Naive thymus-derived CD4-positive, alpha-beta T cell (primary cell): ENCODE measurements at regions of chr10 and their contacts with region 1.

Region 1: GRCh38 chr10:102394079-102394800 is 1.3 kb upstream of the NFKB2 start:
- DNase-seq: peak; percentile 96 to 100 (median 99)
- ATAC-seq: peak; percentile 83
- H3K4me3 ChIP-seq: peak overlapping the region; percentile 78
- H3K4me3 Mint-ChIP-seq: peak overlapping the region; percentile 92 to 99 (median 96)
- H3K27ac ChIP-seq: peak overlapping the region; percentile 100
- H3K27ac Mint-ChIP-seq: peak overlapping the region; percentile 94 to 100 (median 100)
- H3K4me1 ChIP-seq: peaks cover 16 to 24% of the 10 kb centered on the region in 2 donors
- H3K4me1 Mint-ChIP-seq: peaks cover 20 to 45% (median 39%) of the 10 kb centered on the region in 7 donors
- H3K27me3 ChIP-seq: no peaks in the 10 kb centered on the region
- H3K27me3 Mint-ChIP-seq: peaks cover 0 to 4% (median 0%) of the 10 kb centered on the region in 5 donors

Region 2: DNA sequence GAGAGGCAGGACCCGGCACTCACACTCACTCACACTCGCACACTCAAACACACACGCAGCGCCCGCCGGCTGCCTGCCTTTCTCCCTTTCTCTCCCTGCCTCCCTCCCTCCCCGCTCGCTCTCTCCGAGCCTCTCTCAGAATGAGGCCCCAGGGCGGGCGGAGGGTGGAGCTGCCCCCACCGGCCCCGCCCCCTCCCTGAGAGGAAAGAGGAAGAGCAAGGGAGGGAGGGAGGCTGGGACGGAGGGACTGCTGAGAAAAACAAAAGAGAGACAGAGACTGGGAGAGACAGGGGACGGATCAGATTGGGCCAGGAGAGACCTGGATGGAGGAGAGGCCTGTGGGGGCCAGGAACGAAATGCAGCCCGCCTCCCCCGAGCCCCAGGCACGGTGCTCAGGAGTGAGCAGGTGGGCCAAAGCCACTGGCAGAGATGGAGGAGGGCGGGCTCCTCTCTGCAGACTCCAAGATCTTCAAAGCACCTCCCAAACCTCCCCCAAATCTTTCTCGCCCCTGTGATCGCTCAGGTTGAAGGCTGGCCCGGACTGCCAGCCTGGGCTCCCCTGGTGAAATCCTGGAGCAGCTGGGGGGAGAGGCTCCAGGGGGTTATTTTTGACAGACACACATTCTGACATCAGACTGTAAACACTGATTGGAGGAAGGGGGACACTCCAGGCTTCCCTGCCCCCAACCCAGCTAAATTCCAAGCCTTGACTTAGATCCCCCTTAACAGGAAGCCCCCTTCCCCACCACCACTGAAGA is 279.2 kb before region 1 on chr10:
- CTCF ChIA-PET with region 1: no interaction called
- POLR2A ChIA-PET with region 1: no interaction called
- intact Hi-C with region 1: loop called in 1 of 2 experiments (anchors 2 kb)
- DNase-seq: peak; percentile 61 to 83 (median 70)
- ATAC-seq: peak; percentile 86
- H3K4me3 ChIP-seq: peak overlapping the region; percentile 77
- H3K4me3 Mint-ChIP-seq: peak overlapping the region; percentile 84 to 97 (median 92)
- H3K27ac ChIP-seq: peak overlapping the region; percentile 97
- H3K27ac Mint-ChIP-seq: peak overlapping the region; percentile 80 to 98 (median 92)
- H3K4me1 ChIP-seq: peaks cover 49 to 58% of the 10 kb centered on the region in 2 donors
- H3K4me1 Mint-ChIP-seq: peaks cover 54 to 76% (median 67%) of the 10 kb centered on the region in 7 donors
- H3K27me3 ChIP-seq: no peaks in the 10 kb centered on the region
- H3K27me3 Mint-ChIP-seq: no peaks in the 10 kb centered on the region

Region 3: GRCh38 chr10:102225646-102226541 is 168.3 kb before region 1 on chr10 and contains the start of gene ELOVL3:
- CTCF ChIA-PET with region 1: interaction called, 5 read pairs
- POLR2A ChIA-PET with region 1: interaction called, 5 read pairs
- intact Hi-C with region 1: loop called (anchors 1 kb)
- DNase-seq: peak; percentile 56 to 83 (median 79)
- ATAC-seq: peak; percentile 95
- H3K4me3 ChIP-seq: peak within 1 kb of the TSS; percentile 26
- H3K4me3 Mint-ChIP-seq: peak within 1 kb of the TSS; percentile 72 to 95 (median 80)
- H3K27ac ChIP-seq: no peak within 1 kb of the TSS
- H3K27ac Mint-ChIP-seq: peak within 1 kb of the TSS in 5 of 9 donors; percentile 14 to 78 (median 74)
- H3K4me1 ChIP-seq: peaks cover 20 to 22% of the 10 kb centered on the region in 2 donors
- H3K4me1 Mint-ChIP-seq: peaks cover 14 to 23% (median 21%) of the 10 kb centered on the region in 7 donors
- H3K27me3 ChIP-seq: peaks cover 3 to 5% of the 10 kb centered on the region in 2 donors
- H3K27me3 Mint-ChIP-seq: peaks cover 36 to 74% (median 39%) of the 10 kb centered on the region in 5 donors
- total RNA-seq, gene ELOVL3: not detected

Region 4: GRCh38 chr10:102432162-102432950 is 38.1 kb after region 1 on chr10 and contains the start of gene CUEDC2:
- CTCF ChIA-PET with region 1: interaction called, 5 read pairs
- POLR2A ChIA-PET with region 1: interaction called, 6 read pairs
- intact Hi-C with region 1: loop called (anchors 1 kb)
- DNase-seq: peak; percentile 86 to 97 (median 91)
- ATAC-seq: peak; percentile 98
- H3K4me3 ChIP-seq: peak within 1 kb of the TSS; percentile 96
- H3K4me3 Mint-ChIP-seq: peak within 1 kb of the TSS; percentile 81 to 96 (median 93)
- H3K27ac ChIP-seq: peak within 1 kb of the TSS; percentile 80
- H3K27ac Mint-ChIP-seq: peak within 1 kb of the TSS; percentile 90 to 97 (median 94)
- H3K4me1 ChIP-seq: peaks cover 28 to 49% of the 10 kb centered on the region in 2 donors
- H3K4me1 Mint-ChIP-seq: peaks cover 38 to 60% (median 48%) of the 10 kb centered on the region in 7 donors
- H3K27me3 ChIP-seq: no peaks in the 10 kb centered on the region
- H3K27me3 Mint-ChIP-seq: no peaks in the 10 kb centered on the region
- total RNA-seq, gene CUEDC2: 27.0 to 69.0 (median 31.9) TPM

Region 5: DNA sequence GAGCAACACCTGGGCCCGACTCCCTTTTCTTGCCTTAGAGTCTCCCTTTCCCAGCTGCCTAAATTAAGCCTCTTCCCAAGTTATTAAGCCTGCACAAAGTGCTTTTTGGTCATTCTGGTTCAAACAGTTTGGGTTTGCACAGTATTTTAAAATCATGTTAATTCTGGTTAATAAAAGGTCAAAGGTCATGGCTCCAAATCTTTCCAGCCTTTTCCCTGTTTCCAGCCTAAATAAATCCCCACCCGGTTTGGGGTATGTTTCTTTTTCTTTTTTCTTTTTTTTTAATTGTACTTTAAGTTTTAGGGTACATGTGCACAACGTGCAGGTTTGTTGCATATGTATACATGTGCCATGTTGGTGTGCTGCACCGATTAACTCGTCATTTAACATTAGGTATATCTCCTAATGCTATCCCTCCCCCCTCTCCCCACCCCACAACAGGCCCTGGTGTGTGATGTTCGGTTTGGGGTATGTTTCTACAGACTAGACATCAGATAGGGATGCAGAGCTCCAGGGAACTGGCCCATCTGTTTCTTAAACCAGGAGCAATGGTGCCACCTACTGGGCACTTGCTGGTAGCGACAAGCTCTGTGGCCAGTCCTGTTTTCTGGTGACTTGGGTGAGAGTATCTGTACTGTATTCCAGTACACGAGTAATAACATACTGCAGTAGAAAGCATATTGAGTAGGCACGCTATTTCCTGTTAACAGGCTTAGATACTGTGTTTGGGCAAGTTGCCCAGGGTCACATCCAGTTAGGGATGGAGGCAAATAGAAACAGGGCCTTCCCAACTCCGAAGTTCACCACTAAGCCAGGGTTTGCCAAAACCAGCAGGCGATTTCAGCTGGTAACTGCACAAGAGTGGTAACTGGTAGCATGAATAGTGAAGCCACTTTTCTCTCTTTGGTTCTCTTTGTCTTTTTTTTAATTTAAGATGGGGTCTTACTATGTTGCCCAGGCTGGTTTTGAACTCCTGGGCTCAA is 189.5 kb after region 1 on chr10:
- CTCF ChIA-PET with region 1: interaction called, 14 read pairs
- POLR2A ChIA-PET with region 1: interaction called, 3 read pairs
- intact Hi-C with region 1: loop called in 1 of 2 experiments (anchors 5 kb)
- DNase-seq: peak; percentile 57 to 79 (median 76)
- ATAC-seq: peak; percentile 97
- H3K4me3 ChIP-seq: no peak overlapping the region
- H3K4me3 Mint-ChIP-seq: no peak overlapping the region
- H3K27ac ChIP-seq: no peak overlapping the region
- H3K27ac Mint-ChIP-seq: peak overlapping the region in 5 of 9 donors; percentile 14 to 76 (median 47)
- H3K4me1 ChIP-seq: no peaks in the 10 kb centered on the region
- H3K4me1 Mint-ChIP-seq: peaks cover 6 to 21% (median 16%) of the 10 kb centered on the region in 7 donors
- H3K27me3 ChIP-seq: no peaks in the 10 kb centered on the region
- H3K27me3 Mint-ChIP-seq: no peaks in the 10 kb centered on the region

Region 6: DNA sequence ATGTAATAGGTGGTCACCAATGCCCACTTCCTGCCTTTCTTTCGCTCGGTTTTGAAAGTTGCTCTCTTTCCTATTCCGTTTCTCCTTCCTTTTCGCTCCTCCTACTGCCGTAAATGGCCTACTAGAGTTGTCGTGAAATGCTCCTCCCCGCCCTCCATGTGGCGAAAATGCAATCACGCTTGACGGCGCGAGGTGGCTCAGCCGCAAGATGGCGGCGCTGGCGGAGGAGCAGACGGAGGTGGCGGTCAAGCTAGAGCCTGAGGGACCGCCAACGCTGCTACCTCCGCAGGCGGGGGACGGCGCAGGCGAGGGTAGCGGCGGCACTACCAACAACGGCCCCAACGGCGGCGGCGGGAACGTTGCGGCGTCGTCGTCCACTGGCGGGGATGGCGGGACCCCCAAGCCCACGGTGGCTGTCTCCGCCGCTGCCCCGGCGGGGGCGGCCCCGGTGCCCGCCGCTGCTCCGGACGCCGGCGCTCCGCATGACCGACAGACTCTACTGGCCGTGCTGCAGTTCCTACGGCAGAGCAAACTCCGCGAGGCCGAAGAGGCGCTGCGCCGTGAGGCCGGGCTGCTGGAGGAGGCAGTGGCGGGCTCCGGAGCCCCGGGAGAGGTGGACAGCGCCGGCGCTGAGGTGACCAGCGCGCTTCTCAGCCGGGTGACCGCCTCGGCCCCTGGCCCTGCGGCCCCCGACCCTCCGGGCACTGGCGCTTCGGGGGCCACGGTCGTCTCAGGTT is 973.7 kb after region 1 on chr10 and contains the start of gene TAF5:
- CTCF ChIA-PET with region 1: no interaction called
- POLR2A ChIA-PET with region 1: no interaction called
- intact Hi-C with region 1: loop called in 1 of 2 experiments (anchors 10 kb)
- DNase-seq: peak; percentile 70 to 94 (median 90)
- ATAC-seq: peak; percentile 88
- H3K4me3 ChIP-seq: peak within 1 kb of the TSS; percentile 58
- H3K4me3 Mint-ChIP-seq: peak within 1 kb of the TSS; percentile 92 to 99 (median 96)
- H3K27ac ChIP-seq: peak within 1 kb of the TSS; percentile 77
- H3K27ac Mint-ChIP-seq: peak within 1 kb of the TSS; percentile 84 to 98 (median 94)
- H3K4me1 ChIP-seq: peaks cover 4 to 11% of the 10 kb centered on the region in 2 donors
- H3K4me1 Mint-ChIP-seq: peaks cover 0 to 35% (median 23%) of the 10 kb centered on the region in 7 donors
- H3K27me3 ChIP-seq: no peaks in the 10 kb centered on the region
- H3K27me3 Mint-ChIP-seq: no peaks in the 10 kb centered on the region
- total RNA-seq, gene TAF5: 4.7 to 8.9 (median 7.1) TPM

Region 7: GRCh38 chr10:103828107-103828506 is 1433.9 kb after region 1 on chr10:
- CTCF ChIA-PET with region 1: no interaction called
- POLR2A ChIA-PET with region 1: no interaction called
- intact Hi-C with region 1: no loop called
- DNase-seq: no peak
- ATAC-seq: no peak
- H3K4me3 ChIP-seq: no peak overlapping the region
- H3K4me3 Mint-ChIP-seq: no peak overlapping the region
- H3K27ac ChIP-seq: no peak overlapping the region
- H3K27ac Mint-ChIP-seq: no peak overlapping the region
- H3K4me1 ChIP-seq: no peaks in the 10 kb centered on the region
- H3K4me1 Mint-ChIP-seq: peaks cover 0 to 2% (median 0%) of the 10 kb centered on the region in 7 donors
- H3K27me3 ChIP-seq: no peaks in the 10 kb centered on the region
- H3K27me3 Mint-ChIP-seq: peaks cover 0 to 37% (median 3%) of the 10 kb centered on the region in 5 donors